ENCODE measurements at regions of chr3 and their contacts with region 1.

Region 1: DNA sequence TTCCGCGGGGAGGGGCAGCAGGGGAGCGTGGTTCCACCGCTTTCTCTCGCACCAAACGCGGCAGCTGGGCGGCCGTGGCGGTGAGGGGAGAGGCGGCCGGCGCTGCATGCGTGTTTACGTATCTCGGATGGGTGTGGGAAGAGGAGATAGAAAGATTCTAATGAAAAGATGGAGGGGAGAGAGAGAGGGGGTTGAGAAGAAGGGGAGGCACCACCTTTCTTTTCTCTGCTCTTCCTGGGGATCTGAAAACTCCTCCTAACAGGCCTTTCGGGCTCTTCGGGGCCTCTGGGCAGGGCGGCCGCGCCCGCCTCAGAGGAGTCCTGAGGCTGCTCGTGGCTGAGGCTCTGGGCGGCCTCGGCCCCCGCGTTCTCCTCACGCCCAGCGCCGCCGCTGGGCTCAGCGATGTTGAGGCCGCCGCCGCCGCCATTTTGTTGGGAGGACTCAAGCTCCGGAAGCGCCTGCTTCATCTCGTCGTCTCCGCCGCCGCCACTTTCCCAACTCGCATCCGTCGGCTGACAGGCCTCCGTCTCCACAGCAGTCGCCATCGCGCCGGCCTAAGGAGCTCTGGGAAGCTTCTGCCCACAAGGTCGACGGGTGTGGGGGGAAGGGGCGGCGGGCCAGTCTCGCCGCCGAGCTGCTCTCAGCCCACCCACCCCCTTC is 473 bp downstream of the TASOR start:
- DNase-seq: peak; percentile 52 to 88 (median 77)
- ATAC-seq: peak; percentile 69
- H3K4me3 ChIP-seq: peak overlapping the region; percentile 89 to 91
- H3K4me3 Mint-ChIP-seq: peak overlapping the region; percentile 95
- H3K27ac ChIP-seq: peak overlapping the region; percentile 98
- H3K27ac Mint-ChIP-seq: peak overlapping the region; percentile 99
- H3K4me1 ChIP-seq: peaks cover 47% of the 10 kb centered on the region
- H3K4me1 Mint-ChIP-seq: peaks cover 39% of the 10 kb centered on the region
- H3K27me3 ChIP-seq: no peaks in the 10 kb centered on the region
- H3K27me3 Mint-ChIP-seq: no peaks in the 10 kb centered on the region
- CTCF ChIP-seq: no peak

Region 2: GRCh38 chr3:56059731-56060130 is 622.9 kb before region 1 on chr3:
- CTCF ChIA-PET with region 1: no interaction called
- POLR2A ChIA-PET with region 1: no interaction called
- intact Hi-C with region 1: no loop called
- DNase-seq: no peak
- ATAC-seq: no peak
- H3K4me3 ChIP-seq: no peak overlapping the region
- H3K4me3 Mint-ChIP-seq: no peak overlapping the region
- H3K27ac ChIP-seq: no peak overlapping the region
- H3K27ac Mint-ChIP-seq: no peak overlapping the region
- H3K4me1 ChIP-seq: no peaks in the 10 kb centered on the region
- H3K4me1 Mint-ChIP-seq: no peaks in the 10 kb centered on the region
- H3K27me3 ChIP-seq: no peaks in the 10 kb centered on the region
- H3K27me3 Mint-ChIP-seq: peaks cover 2% of the 10 kb centered on the region
- CTCF ChIP-seq: no peak

Region 3: DNA sequence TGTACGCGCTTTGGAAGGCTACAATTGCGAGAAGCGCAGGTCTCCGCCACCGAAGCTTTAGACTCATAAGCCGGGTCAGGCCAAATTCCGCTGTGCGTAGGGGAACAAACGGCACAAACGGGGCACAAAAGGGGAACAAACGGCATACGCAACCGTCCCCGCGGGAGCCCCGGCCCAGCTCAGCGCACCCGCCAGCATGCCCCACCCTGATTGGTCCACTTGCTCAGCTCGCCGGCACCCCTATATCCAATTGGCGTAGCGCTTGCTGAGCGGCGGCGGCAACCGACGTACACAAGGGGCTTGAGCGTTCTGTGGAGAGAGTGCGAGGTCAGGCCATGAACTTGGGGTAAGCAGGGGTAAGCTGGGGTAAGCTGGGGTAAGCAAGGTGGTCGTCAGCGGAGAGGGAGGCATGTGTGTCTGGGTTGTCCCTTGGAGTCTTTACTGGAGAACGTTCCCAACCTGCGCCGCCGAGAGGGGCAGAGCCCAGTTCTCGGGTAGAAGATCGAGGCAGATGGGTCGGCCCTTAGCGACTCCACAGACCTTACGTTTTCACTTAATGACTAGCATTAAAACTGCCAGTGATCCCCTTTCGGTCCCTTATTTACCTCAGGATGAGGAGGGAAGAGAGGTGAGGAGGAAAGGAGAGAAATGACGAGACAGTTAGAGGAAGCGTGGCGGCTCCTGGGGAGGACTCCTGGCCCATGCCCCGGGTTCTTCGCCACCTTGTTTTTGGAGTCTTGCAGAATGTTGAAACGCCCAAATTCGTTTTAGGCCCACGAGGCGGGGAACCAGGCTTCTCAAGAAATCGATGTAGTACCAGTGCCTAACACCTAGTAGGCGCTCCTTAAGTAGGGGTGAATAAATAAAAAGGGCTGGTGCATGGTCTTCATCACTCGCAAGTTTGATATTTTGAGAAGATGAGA is 125.4 kb before region 1 on chr3 and contains the start of gene CCDC66:
- CTCF ChIA-PET with region 1: interaction called, 5 read pairs
- POLR2A ChIA-PET with region 1: interaction called, 28 read pairs
- intact Hi-C with region 1: loop called (anchors 1 to 2 kb)
- DNase-seq: peak; percentile 88 to 96 (median 94)
- ATAC-seq: peak; percentile 89
- H3K4me3 ChIP-seq: peak within 1 kb of the TSS; percentile 70 to 78
- H3K4me3 Mint-ChIP-seq: peak within 1 kb of the TSS; percentile 100
- H3K27ac ChIP-seq: peak within 1 kb of the TSS; percentile 91 to 93
- H3K27ac Mint-ChIP-seq: peak within 1 kb of the TSS; percentile 100
- H3K4me1 ChIP-seq: peaks cover 22% of the 10 kb centered on the region
- H3K4me1 Mint-ChIP-seq: peaks cover 32% of the 10 kb centered on the region
- H3K27me3 ChIP-seq: no peaks in the 10 kb centered on the region
- H3K27me3 Mint-ChIP-seq: no peaks in the 10 kb centered on the region
- CTCF ChIP-seq: peak; percentile 83
- total RNA-seq, gene CCDC66: 63.9 to 65.4 TPM

Region 4: GRCh38 chr3:56593455-56594158 is 89.0 kb before region 1 on chr3:
- CTCF ChIA-PET with region 1: no interaction called
- POLR2A ChIA-PET with region 1: interaction called, 12 read pairs
- intact Hi-C with region 1: no loop called
- DNase-seq: peak; percentile 19 to 86 (median 62)
- ATAC-seq: peak; percentile 99
- H3K4me3 ChIP-seq: peak overlapping the region in 1 of 2 experiments; percentile 5
- H3K4me3 Mint-ChIP-seq: peak overlapping the region; percentile 73
- H3K27ac ChIP-seq: peak overlapping the region; percentile 40 to 51
- H3K27ac Mint-ChIP-seq: peak overlapping the region; percentile 92
- H3K4me1 ChIP-seq: peaks cover 60% of the 10 kb centered on the region
- H3K4me1 Mint-ChIP-seq: peaks cover 65% of the 10 kb centered on the region
- H3K27me3 ChIP-seq: no peaks in the 10 kb centered on the region
- H3K27me3 Mint-ChIP-seq: no peaks in the 10 kb centered on the region
- CTCF ChIP-seq: no peak

Region 5: GRCh38 chr3:56645407-56645806 is 37.2 kb before region 1 on chr3:
- CTCF ChIA-PET with region 1: no interaction called
- POLR2A ChIA-PET with region 1: no interaction called
- intact Hi-C with region 1: loop called in 1 of 2 experiments (anchors 5 kb)
- DNase-seq: no peak
- ATAC-seq: no peak
- H3K4me3 ChIP-seq: no peak overlapping the region
- H3K4me3 Mint-ChIP-seq: no peak overlapping the region
- H3K27ac ChIP-seq: no peak overlapping the region
- H3K27ac Mint-ChIP-seq: no peak overlapping the region
- H3K4me1 ChIP-seq: no peaks in the 10 kb centered on the region
- H3K4me1 Mint-ChIP-seq: peaks cover 34% of the 10 kb centered on the region
- H3K27me3 ChIP-seq: no peaks in the 10 kb centered on the region
- H3K27me3 Mint-ChIP-seq: no peaks in the 10 kb centered on the region
- CTCF ChIP-seq: no peak

Region 6: DNA sequence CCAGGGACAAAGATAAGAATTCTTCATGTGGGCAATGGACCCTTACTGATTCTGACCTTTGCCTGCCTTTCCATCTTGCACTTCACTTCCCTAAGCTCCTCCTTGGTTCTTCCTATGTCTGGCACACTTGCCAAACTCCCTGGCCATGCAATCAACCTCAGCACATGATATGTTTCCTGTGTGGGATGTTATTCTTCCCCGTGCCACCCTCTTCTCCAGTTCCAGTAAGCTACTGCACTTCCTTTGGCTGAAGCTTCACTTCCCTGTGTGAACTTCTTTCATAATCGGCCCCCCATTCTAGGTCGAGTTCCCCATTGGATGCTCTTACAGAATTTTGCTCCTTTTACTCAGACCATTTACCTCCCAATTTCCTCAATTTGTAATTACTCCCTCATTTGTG is 11.2 kb after region 1 on chr3:
- CTCF ChIA-PET with region 1: interaction called, 5 read pairs
- POLR2A ChIA-PET with region 1: interaction called, 46 read pairs
- intact Hi-C with region 1: loop called in 1 of 2 experiments (anchors 1 kb)
- DNase-seq: peak in 1 of 9 experiments; percentile 38
- ATAC-seq: no peak
- H3K4me3 ChIP-seq: no peak overlapping the region
- H3K4me3 Mint-ChIP-seq: peak overlapping the region; percentile 80
- H3K27ac ChIP-seq: peak overlapping the region in 1 of 2 experiments; percentile 60
- H3K27ac Mint-ChIP-seq: peak overlapping the region; percentile 89
- H3K4me1 ChIP-seq: peaks cover 35% of the 10 kb centered on the region
- H3K4me1 Mint-ChIP-seq: peaks cover 46% of the 10 kb centered on the region
- H3K27me3 ChIP-seq: no peaks in the 10 kb centered on the region
- H3K27me3 Mint-ChIP-seq: no peaks in the 10 kb centered on the region
- CTCF ChIP-seq: no peak

Region 7: DNA sequence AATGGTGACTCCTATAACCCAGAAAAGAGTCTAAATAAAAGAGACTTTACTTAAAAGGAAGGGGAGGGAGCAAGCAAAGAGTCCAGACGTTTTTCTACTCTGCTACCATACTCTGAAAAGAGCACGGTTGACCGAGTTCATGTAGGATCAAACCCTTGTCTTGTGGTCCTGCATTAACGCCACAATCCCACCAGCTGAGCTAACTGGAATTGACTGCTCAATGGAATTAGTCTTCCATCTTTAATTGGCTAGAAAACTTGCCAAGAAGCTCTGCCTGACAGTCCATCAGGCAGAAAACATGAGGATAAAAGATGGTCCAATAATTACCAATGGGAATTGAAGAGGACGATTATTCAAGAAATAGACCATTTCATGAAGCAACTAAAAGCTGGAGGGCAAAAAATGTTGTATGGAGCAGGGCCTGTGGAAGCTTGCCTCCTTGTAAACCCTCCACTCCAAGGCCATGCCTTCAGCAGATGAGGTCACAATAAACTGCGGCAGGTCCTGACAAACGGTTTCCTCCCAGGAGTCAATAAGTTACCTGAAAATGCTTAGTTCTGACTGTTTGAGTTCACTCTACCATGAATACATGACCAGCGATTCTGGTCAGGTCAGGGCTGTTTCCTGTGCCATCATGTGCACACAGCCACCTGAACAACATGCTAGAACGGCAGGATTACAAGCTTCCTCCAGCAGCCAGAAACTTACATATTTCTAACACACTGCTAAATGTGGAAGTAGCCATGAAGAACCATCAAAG is 154.8 kb after region 1 on chr3:
- CTCF ChIA-PET with region 1: no interaction called
- POLR2A ChIA-PET with region 1: no interaction called
- intact Hi-C with region 1: no loop called
- DNase-seq: no peak
- ATAC-seq: no peak
- H3K4me3 ChIP-seq: no peak overlapping the region
- H3K4me3 Mint-ChIP-seq: no peak overlapping the region
- H3K27ac ChIP-seq: no peak overlapping the region
- H3K27ac Mint-ChIP-seq: no peak overlapping the region
- H3K4me1 ChIP-seq: peaks cover 4% of the 10 kb centered on the region
- H3K4me1 Mint-ChIP-seq: peaks cover 38% of the 10 kb centered on the region
- H3K27me3 ChIP-seq: no peaks in the 10 kb centered on the region
- H3K27me3 Mint-ChIP-seq: no peaks in the 10 kb centered on the region
- CTCF ChIP-seq: no peak

Region 8: DNA sequence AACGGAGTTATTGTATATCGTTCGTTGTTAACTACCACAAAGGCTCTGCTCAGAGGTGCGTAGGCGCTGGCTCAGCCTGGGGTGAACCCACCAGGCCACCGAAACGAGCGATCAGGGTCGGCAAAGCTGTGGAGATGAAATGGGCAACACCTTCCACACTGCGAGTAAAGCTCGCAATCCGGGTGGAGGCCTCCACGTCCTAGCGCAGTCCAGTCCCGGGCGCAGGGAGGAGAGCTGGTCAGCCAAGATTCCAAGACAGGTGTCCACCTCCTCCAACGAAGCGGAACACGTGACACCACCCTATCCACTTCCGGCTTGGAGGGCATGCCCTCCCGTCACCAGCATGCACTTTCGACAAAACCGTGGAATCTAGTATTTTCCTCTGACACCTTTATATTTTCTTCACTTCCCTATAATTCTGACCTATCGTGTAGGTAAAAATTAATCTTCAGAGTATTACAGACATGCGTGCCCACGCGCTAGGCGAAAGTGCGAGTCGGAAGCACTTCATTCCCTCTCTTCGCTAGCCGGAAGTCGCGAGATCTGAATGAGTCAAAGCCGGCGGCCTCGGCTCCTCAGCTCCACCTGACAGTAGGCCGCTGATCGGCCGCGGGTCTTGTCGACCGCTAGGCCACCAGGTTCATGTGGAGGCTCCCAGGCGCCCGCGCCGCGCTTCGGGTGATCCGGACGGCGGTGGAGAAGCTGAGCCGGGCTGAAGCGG is 873.3 kb after region 1 on chr3 and contains the start of gene PDE12:
- CTCF ChIA-PET with region 1: no interaction called
- POLR2A ChIA-PET with region 1: no interaction called
- intact Hi-C with region 1: loop called in 1 of 2 experiments (anchors 10 kb)
- DNase-seq: peak; percentile 66 to 91 (median 81)
- ATAC-seq: peak; percentile 69
- H3K4me3 ChIP-seq: peak within 1 kb of the TSS; percentile 77 to 96
- H3K4me3 Mint-ChIP-seq: peak within 1 kb of the TSS; percentile 88
- H3K27ac ChIP-seq: peak within 1 kb of the TSS; percentile 87 to 98
- H3K27ac Mint-ChIP-seq: peak within 1 kb of the TSS; percentile 99
- H3K4me1 ChIP-seq: peaks cover 31% of the 10 kb centered on the region
- H3K4me1 Mint-ChIP-seq: peaks cover 40% of the 10 kb centered on the region
- H3K27me3 ChIP-seq: no peaks in the 10 kb centered on the region
- H3K27me3 Mint-ChIP-seq: no peaks in the 10 kb centered on the region
- CTCF ChIP-seq: no peak
- total RNA-seq, gene PDE12: 44.8 to 45.9 TPM

Region 9: GRCh38 chr3:57637391-57637790 is 954.8 kb after region 1 on chr3:
- CTCF ChIA-PET with region 1: no interaction called
- POLR2A ChIA-PET with region 1: no interaction called
- intact Hi-C with region 1: no loop called
- DNase-seq: no peak
- ATAC-seq: no peak
- H3K4me3 ChIP-seq: no peak overlapping the region
- H3K4me3 Mint-ChIP-seq: no peak overlapping the region
- H3K27ac ChIP-seq: no peak overlapping the region
- H3K27ac Mint-ChIP-seq: no peak overlapping the region
- H3K4me1 ChIP-seq: no peaks in the 10 kb centered on the region
- H3K4me1 Mint-ChIP-seq: peaks cover 4% of the 10 kb centered on the region
- H3K27me3 ChIP-seq: no peaks in the 10 kb centered on the region
- H3K27me3 Mint-ChIP-seq: no peaks in the 10 kb centered on the region
- CTCF ChIP-seq: no peak

Measured in CD8-positive, alpha-beta T cell (primary cell).